Activated T-helper 2 cell treated with anti-CD3 and anti-CD28 coated beads, Interferon-gamma antibody, Interleukin-2, Interleukin-4, amounts not matched to agents 10 μg/mL and 5 μg/mL and 100 μg/mL, durations not matched to agents 14 hours and 24 hours and 36 hours (primary cell): ENCODE measurements at regions of chr18 and their contacts with region 1.

Region 1: GRCh38 chr18:74495581-74496507 is at the start of gene CNDP2:
- DNase-seq: peak; percentile 97
- H3K4me3 Mint-ChIP-seq: peak within 1 kb of the TSS; percentile 93
- H3K27ac Mint-ChIP-seq: peak within 1 kb of the TSS; percentile 96
- H3K4me1 Mint-ChIP-seq: peaks cover 29% of the 10 kb centered on the region
- H3K27me3 Mint-ChIP-seq: peaks cover 10% of the 10 kb centered on the region
- total RNA-seq, gene CNDP2: 158 and 166 TPM in 2 replicates

Region 2: GRCh38 chr18:74139888-74140287 is 356.0 kb before region 1 on chr18:
- intact Hi-C with region 1: loop called (anchors 2 kb)
- DNase-seq: no peak
- H3K4me3 Mint-ChIP-seq: peak overlapping the region; percentile 67
- H3K27ac Mint-ChIP-seq: peak overlapping the region; percentile 92
- H3K4me1 Mint-ChIP-seq: peaks cover 36% of the 10 kb centered on the region
- H3K27me3 Mint-ChIP-seq: peaks cover under 1% of the 10 kb centered on the region

Region 3: GRCh38 chr18:74196220-74197119 is 299.4 kb before region 1 on chr18:
- intact Hi-C with region 1: loop called (anchors 1 kb)
- DNase-seq: peak; percentile 30
- H3K4me3 Mint-ChIP-seq: peak overlapping the region; percentile 73
- H3K27ac Mint-ChIP-seq: no peak overlapping the region
- H3K4me1 Mint-ChIP-seq: peaks cover 6% of the 10 kb centered on the region
- H3K27me3 Mint-ChIP-seq: peaks cover 7% of the 10 kb centered on the region

Region 4: GRCh38 chr18:74353169-74353775 is 142.6 kb before region 1 on chr18:
- intact Hi-C with region 1: loop called (anchors 1 kb)
- DNase-seq: peak; percentile 29
- H3K4me3 Mint-ChIP-seq: no peak overlapping the region
- H3K27ac Mint-ChIP-seq: no peak overlapping the region
- H3K4me1 Mint-ChIP-seq: peaks cover 18% of the 10 kb centered on the region
- H3K27me3 Mint-ChIP-seq: peaks cover 28% of the 10 kb centered on the region

Region 5: GRCh38 chr18:74551936-74552555 is 56.2 kb after region 1 on chr18:
- intact Hi-C with region 1: loop called (anchors 5 kb)
- DNase-seq: peak; percentile 60
- H3K4me3 Mint-ChIP-seq: no peak overlapping the region
- H3K27ac Mint-ChIP-seq: no peak overlapping the region
- H3K4me1 Mint-ChIP-seq: no peaks in the 10 kb centered on the region
- H3K27me3 Mint-ChIP-seq: peaks cover 8% of the 10 kb centered on the region

Region 6: DNA sequence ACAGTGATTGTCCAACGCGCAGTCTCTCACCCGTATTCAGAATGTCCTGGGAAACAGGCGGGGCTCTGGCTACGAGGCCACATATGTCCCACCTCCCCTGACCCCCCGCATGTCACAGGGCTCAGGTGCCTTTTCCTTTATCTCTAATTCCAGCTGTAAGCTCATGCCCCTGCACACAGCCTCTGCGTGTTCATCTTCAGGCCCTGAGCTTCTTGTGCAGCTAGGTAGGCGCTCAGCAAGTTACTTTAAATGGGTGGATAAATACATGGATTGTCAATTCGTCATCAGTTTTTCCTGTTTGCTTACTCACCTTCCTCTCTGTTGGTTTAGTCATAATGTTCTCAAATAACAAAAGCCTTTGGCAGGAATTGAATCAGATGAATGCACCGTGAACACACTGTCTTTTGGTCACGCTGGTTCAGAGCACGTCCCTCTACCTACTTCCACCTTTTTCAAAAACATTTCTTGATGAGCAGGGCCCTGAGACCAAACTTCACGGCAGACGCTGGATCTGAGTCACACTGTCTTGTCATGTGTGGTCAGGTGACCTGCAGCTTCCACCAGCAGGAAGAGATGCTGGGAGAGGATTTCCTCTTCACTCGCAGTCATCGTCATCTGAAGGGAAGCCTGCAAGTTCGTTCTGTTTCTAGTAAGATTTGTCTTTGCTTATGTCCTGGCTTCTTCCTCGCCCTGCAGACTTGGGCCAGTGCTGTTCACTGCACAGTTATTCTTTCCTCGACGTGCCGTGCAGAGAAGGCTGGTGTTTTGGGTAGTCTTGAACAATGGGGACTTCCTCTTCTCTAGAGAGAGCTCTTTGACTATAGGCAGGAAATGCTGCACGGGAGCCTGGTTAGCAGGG is 575.0 kb after region 1 on chr18:
- intact Hi-C with region 1: loop called (anchors 5 kb)
- DNase-seq: peak; percentile 65
- H3K4me3 Mint-ChIP-seq: peak overlapping the region; percentile 79
- H3K27ac Mint-ChIP-seq: peak overlapping the region; percentile 95
- H3K4me1 Mint-ChIP-seq: peaks cover 19% of the 10 kb centered on the region
- H3K27me3 Mint-ChIP-seq: no peaks in the 10 kb centered on the region